ENCODE measurements at regions of chr17 and their contacts with region 1.

Region 1: DNA sequence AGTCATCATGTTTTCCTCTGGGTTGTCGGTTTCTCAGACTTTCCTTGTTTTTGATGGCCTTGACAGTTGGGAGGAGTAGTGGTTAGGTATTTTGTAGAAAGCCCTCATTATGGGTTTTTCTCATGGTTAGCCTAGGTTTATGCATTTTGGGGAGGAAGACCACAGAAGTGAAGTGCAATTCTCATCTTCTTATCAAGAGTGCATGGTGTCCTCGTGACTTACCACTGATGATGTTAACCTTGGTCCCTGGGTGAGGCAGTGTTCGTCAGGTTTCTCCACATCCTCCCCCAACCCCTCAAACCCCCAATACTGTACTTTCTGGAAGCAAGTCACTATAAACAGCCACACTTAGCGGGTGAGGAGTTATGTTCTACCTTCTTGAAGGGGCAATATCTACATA is 42.3 kb downstream of the BPTF start:
- DNase-seq: peak; percentile 58
- ATAC-seq: peak; percentile 75
- H3K4me3 Mint-ChIP-seq: no peak overlapping the region
- H3K27ac Mint-ChIP-seq: peak overlapping the region; percentile 76
- H3K4me1 Mint-ChIP-seq: peaks cover 41% of the 10 kb centered on the region
- H3K27me3 Mint-ChIP-seq: no peaks in the 10 kb centered on the region
- CTCF ChIP-seq: no peak

Region 2: DNA sequence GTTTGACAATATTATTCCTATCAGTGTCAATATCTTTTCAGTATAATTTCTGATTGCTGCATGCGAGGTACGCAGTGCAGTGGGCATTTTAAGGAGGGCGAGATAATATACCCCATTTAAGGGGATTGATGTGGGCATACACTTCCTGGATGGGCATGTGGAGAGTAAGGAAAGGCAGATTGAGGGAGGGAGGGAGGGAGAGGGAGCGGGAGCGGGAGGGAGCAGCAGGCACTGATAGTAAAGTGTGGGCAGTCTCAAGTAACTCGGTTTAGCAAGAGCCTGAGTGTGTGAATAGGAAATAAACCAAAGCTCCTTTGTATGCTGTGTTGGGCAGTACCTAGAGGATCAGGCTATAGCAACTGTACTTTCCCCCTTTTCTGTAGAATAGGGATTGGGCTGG is 37.2 kb before region 1 on chr17:
- CTCF ChIA-PET with region 1: no interaction called
- POLR2A ChIA-PET with region 1: interaction called, 3 read pairs
- intact Hi-C with region 1: loop called (anchors 5 kb)
- DNase-seq: no peak
- ATAC-seq: no peak
- H3K4me3 Mint-ChIP-seq: no peak overlapping the region
- H3K27ac Mint-ChIP-seq: peak overlapping the region; percentile 37
- H3K4me1 Mint-ChIP-seq: peaks cover 56% of the 10 kb centered on the region
- H3K27me3 Mint-ChIP-seq: no peaks in the 10 kb centered on the region
- CTCF ChIP-seq: no peak

Measured in activated CD8-positive, alpha-beta T cell treated with anti-CD3 and anti-CD28 coated beads for 36 hours (primary cell).